Activated T-helper 2 cell treated with anti-CD3 and anti-CD28 coated beads, Interferon-gamma antibody, Interleukin-2, Interleukin-4, amounts not matched to agents 10 μg/mL and 5 μg/mL and 100 μg/mL, durations not matched to agents 14 hours and 24 hours and 36 hours (primary cell): ENCODE measurements at regions of chr11 and their contacts with region 1.

Region 1: DNA sequence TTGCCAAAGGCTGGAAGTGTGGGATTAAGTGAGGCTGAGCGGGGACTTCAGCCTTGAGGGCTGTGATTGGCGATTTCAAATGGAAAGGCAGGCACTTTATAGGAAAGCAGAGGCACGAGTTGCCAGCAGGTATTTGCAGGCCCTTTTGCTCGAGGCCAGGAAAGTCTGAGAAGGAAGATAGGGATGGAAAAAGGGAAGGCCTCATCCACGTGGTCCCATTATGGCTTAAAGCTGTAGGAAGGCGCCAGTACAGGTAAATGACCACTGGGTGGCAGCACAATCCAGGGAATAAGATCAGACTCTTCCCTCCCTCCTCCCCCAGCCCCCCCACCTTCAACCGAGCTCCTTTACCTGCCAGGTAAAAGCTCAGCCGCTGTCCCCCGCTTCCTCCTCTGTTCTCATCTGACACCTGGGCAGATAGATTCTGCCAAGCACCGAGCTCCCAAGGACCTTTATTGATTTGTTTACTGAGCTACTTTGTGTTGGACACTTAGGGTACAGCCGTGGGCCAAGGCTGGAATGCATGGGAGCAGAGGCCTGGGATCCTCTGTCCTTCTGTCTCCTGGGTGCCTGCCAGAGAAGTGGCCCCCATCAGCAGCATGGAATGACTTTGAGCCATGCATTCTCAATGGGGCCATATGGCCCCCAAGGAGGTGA is 7.5 kb downstream of the P2RX3 start:
- DNase-seq: no peak
- H3K4me3 Mint-ChIP-seq: no peak overlapping the region
- H3K27ac Mint-ChIP-seq: no peak overlapping the region
- H3K4me1 Mint-ChIP-seq: no peaks in the 10 kb centered on the region
- H3K27me3 Mint-ChIP-seq: peaks cover 1% of the 10 kb centered on the region

Region 2: GRCh38 chr11:57406337-57406904 is 60.7 kb after region 1 on chr11:
- intact Hi-C with region 1: no loop called
- DNase-seq: no peak
- H3K4me3 Mint-ChIP-seq: peak overlapping the region; percentile 2
- H3K27ac Mint-ChIP-seq: peak overlapping the region; percentile 98
- H3K4me1 Mint-ChIP-seq: peaks cover 30% of the 10 kb centered on the region
- H3K27me3 Mint-ChIP-seq: no peaks in the 10 kb centered on the region

Region 3: GRCh38 chr11:57480409-57481137 is 134.9 kb after region 1 on chr11:
- intact Hi-C with region 1: loop called (anchors 1 kb)
- DNase-seq: peak; percentile 61
- H3K4me3 Mint-ChIP-seq: no peak overlapping the region
- H3K27ac Mint-ChIP-seq: no peak overlapping the region
- H3K4me1 Mint-ChIP-seq: peaks cover 12% of the 10 kb centered on the region
- H3K27me3 Mint-ChIP-seq: peaks cover 53% of the 10 kb centered on the region

Region 4: GRCh38 chr11:57644748-57645688 is 299.3 kb after region 1 on chr11:
- intact Hi-C with region 1: loop called (anchors 2 kb)
- DNase-seq: peak; percentile 75
- H3K4me3 Mint-ChIP-seq: no peak overlapping the region
- H3K27ac Mint-ChIP-seq: no peak overlapping the region
- H3K4me1 Mint-ChIP-seq: peaks cover 48% of the 10 kb centered on the region
- H3K27me3 Mint-ChIP-seq: peaks cover 46% of the 10 kb centered on the region